ENCODE measurements at regions of chr7 and their contacts with region 1.

Region 1: GRCh38 chr7:44999245-45000095 is 531 bp upstream of the CCM2 start:
- DNase-seq: peak; percentile 99
- H3K4me3 Mint-ChIP-seq: peak overlapping the region; percentile 75
- H3K27ac Mint-ChIP-seq: peak overlapping the region; percentile 16
- H3K4me1 Mint-ChIP-seq: peaks cover 29% of the 10 kb centered on the region
- H3K27me3 Mint-ChIP-seq: no peaks in the 10 kb centered on the region
- CTCF ChIP-seq: no peak

Region 2: DNA sequence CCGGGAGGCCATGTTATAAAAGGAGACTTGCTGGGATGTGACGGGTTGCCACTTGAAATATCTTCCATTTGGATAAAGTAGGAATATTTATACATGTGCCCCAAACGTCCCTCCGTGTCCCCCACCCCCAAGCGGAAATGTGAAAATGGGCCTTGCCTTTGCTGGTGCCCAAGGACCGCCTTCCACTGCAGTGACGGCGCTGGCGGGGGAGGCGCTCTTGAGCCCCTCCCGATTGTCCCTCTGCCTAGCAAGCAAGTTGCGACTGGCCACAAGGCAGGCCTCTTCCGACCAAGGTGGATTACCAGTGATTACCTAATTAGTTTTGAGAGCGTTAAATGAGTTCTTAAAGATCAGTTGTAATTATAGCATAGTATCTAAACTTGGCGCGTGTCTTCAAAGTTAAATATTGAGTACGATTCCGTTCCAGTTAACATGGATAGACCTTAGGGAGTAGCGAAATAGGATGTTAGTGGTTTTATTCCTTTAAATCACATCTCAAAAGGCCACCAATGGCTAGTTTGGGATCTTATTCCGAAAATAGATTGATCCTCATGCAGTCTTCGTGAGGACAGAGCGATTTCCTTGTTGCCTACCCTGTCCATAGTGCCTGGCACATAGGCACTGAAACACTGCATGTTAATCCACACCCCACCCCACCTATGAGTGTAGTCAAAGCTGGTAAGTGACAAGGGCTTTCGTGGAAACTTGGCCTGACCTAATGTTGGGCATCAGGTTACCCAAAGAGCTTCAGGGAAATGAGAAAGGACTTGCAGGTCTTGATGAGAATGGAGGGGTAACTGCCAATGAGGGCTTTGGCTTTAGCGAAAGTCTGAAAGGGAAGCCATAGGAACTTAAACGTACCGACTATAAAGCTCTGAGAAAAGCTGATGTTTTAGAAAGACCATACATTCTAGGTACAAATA is 201.9 kb before region 1 on chr7:
- CTCF ChIA-PET with region 1: no interaction called
- POLR2A ChIA-PET with region 1: interaction called, 10 read pairs
- intact Hi-C with region 1: no loop called
- DNase-seq: peak; percentile 90
- H3K4me3 Mint-ChIP-seq: peak overlapping the region; percentile 87
- H3K27ac Mint-ChIP-seq: peak overlapping the region; percentile 98
- H3K4me1 Mint-ChIP-seq: peaks cover 6% of the 10 kb centered on the region
- H3K27me3 Mint-ChIP-seq: no peaks in the 10 kb centered on the region
- CTCF ChIP-seq: peak; percentile 42

Region 3: DNA sequence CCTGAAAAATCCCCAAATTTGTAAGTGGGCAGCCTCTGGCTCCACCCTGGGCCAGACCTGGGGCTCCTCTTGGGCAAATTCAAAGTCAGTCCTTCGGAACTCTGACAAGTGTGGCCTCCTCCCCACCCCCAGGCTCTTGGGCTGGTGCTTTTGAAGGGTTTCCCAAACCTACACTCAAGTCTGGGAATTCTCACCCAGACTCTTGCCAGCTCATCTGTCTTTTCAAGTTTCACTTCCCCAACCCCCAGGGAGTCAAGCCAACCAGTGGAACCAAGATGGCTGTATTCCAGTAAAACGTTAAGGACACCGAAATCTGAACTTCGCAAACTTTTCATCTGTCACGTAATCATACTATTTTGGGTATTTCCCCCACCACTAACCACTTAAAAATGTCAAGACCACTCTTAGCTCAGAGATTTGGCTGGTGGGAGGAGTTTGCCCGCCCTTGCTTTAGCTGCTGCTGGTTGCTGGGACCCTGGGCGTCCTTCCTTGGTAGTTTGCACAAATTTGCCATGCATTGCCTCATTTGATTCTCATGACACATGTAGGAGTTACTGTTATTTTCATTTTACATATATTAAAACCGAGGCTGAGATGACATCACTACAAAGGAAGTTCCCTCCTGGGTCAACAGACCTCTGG is 19.0 kb before region 1 on chr7:
- CTCF ChIA-PET with region 1: interaction called, 5 read pairs
- POLR2A ChIA-PET with region 1: interaction called, 190 read pairs
- intact Hi-C with region 1: no loop called
- DNase-seq: peak; percentile 90
- H3K4me3 Mint-ChIP-seq: no peak overlapping the region
- H3K27ac Mint-ChIP-seq: peak overlapping the region; percentile 59
- H3K4me1 Mint-ChIP-seq: peaks cover 45% of the 10 kb centered on the region
- H3K27me3 Mint-ChIP-seq: no peaks in the 10 kb centered on the region
- CTCF ChIP-seq: no peak

Region 4: GRCh38 chr7:45013465-45013967 is 14.0 kb after region 1 on chr7:
- CTCF ChIA-PET with region 1: interaction called, 8 read pairs
- POLR2A ChIA-PET with region 1: interaction called, 27 read pairs
- intact Hi-C with region 1: no loop called
- DNase-seq: no peak
- H3K4me3 Mint-ChIP-seq: no peak overlapping the region
- H3K27ac Mint-ChIP-seq: no peak overlapping the region
- H3K4me1 Mint-ChIP-seq: peaks cover 8% of the 10 kb centered on the region
- H3K27me3 Mint-ChIP-seq: no peaks in the 10 kb centered on the region
- CTCF ChIP-seq: no peak

Region 5: DNA sequence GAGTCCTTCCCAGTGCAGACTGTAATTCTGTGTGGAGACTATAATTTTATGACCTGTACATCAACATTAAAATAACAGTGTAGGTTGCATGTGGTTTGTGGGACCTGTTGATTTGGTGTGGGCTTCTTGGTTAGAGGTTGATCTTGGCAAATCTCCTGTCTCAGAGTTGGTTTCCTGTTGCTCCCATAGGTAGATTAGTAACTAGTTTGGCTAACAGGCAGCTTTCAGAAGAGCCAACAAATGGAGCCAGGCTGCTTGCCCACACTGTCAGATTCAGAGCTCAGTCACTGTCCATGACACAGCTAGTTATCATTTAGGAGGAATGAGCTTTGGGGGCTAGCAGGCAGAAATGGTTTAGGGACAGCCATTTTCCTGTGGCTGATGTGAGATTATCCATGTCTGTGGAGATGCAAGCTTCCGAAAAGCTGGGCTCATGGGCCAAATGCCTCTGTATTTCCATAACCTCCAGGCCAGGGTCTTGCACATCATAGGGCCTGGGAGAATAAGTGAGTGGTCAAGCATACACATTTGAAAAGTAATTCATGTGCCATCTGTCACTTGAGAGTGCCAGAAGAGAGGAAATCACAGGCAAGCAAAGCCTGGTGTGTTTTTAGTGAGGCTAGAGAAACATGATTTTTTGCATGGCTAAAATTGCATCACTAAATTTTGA is 33.9 kb after region 1 on chr7:
- CTCF ChIA-PET with region 1: interaction called, 15 read pairs
- POLR2A ChIA-PET with region 1: interaction called, 76 read pairs
- intact Hi-C with region 1: no loop called
- DNase-seq: peak; percentile 50
- H3K4me3 Mint-ChIP-seq: no peak overlapping the region
- H3K27ac Mint-ChIP-seq: peak overlapping the region; percentile 90
- H3K4me1 Mint-ChIP-seq: peaks cover 33% of the 10 kb centered on the region
- H3K27me3 Mint-ChIP-seq: no peaks in the 10 kb centered on the region
- CTCF ChIP-seq: no peak

Region 6: GRCh38 chr7:45136106-45137060 is 136.9 kb after region 1 on chr7:
- CTCF ChIA-PET with region 1: interaction called, 10 read pairs
- POLR2A ChIA-PET with region 1: interaction called, 3 read pairs
- intact Hi-C with region 1: no loop called
- DNase-seq: peak; percentile 90
- H3K4me3 Mint-ChIP-seq: no peak overlapping the region
- H3K27ac Mint-ChIP-seq: no peak overlapping the region
- H3K4me1 Mint-ChIP-seq: peaks cover 10% of the 10 kb centered on the region
- H3K27me3 Mint-ChIP-seq: peaks cover 27% of the 10 kb centered on the region
- CTCF ChIP-seq: peak; percentile 86

Measured in MCF 10A (cell line).